ENCODE measurements at regions of chr7 and their contacts with region 1.

Region 1: DNA sequence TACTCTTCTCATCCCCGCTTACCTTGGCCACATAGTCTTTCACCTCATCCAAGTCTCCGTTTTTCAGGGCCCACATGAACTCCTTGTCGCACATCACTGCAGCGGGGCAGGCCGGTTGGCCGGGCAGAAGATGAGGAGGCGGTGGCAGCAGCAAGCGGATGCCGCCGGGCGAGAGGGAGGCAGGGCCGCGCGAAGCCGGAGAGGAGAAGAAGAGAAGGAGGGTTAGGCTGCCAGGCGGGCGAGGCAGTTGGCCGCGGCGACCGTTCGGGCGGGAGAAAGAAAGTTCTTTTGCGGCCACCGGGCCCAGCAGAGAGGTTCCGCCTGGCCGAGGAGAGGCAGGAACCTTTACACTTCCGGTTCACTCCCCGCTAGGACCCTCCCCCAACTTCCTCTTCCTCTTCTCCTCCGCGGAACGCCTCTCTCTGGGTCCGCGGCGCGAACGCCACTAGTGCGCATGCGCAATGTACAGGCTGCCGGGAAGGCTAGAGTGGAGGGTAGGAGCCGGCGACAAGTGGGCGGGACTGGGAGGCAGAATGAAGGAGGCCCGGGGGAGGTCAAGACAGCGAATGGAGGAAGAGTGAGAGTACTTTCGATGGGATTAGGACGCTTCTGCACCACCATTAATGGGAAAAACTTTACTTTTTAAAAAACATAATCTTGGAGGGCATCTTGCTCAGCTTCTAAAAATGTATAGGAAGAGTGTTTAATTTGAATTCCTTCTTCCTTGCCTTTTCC is at the start of gene MTPN:
- DNase-seq: peak; percentile 100
- total RNA-seq, gene MTPN: 89.3 to 95.0 TPM

Region 2: DNA sequence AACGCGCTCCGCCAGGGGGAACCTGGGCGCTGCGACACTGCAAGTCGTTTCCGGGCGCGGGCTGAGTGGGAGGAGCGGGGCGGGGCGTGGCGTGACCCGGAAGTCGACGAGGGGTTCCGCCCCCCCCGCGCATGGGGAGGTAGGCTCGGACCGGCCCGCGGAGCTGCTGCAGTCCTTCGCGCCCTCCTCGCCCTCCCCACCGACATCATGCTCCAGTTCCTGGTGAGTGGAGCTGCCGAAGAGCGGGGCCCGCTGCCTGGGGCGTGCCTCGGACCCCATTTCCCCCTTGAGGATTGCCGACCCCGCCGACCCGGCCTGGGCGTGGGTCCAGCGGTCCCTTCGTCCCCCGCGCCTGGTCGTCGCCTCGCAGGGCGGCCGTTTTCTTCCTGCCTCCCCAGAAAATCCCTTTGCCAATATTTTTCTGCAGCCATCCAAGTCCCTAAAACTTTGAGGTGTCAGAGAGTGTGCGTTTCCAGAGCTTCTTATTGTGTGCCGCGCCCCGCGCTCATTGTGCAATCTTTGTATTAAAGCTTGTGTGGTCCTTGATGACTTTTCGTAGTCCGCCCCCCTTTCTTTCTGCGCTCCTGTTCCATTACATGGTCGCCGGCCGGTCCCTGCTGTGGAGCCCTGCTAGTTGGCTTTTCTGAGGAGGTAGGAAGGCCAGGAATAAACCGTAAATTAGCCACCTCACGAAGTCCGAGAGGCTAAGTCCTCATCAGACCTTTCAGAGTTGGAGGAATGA is 314.6 kb before region 1 on chr7 and contains the start of gene STMP1:
- intact Hi-C with region 1: loop called in 1 of 2 experiments (anchors 10 kb)
- DNase-seq: peak; percentile 99
- total RNA-seq, gene STMP1: 26.3 to 34.4 TPM

Measured in posterior vena cava (tissue), 2 donors.